Mammary epithelial cell (primary cell): ENCODE measurements at regions of chr6 and their contacts with region 1.

Region 1: DNA sequence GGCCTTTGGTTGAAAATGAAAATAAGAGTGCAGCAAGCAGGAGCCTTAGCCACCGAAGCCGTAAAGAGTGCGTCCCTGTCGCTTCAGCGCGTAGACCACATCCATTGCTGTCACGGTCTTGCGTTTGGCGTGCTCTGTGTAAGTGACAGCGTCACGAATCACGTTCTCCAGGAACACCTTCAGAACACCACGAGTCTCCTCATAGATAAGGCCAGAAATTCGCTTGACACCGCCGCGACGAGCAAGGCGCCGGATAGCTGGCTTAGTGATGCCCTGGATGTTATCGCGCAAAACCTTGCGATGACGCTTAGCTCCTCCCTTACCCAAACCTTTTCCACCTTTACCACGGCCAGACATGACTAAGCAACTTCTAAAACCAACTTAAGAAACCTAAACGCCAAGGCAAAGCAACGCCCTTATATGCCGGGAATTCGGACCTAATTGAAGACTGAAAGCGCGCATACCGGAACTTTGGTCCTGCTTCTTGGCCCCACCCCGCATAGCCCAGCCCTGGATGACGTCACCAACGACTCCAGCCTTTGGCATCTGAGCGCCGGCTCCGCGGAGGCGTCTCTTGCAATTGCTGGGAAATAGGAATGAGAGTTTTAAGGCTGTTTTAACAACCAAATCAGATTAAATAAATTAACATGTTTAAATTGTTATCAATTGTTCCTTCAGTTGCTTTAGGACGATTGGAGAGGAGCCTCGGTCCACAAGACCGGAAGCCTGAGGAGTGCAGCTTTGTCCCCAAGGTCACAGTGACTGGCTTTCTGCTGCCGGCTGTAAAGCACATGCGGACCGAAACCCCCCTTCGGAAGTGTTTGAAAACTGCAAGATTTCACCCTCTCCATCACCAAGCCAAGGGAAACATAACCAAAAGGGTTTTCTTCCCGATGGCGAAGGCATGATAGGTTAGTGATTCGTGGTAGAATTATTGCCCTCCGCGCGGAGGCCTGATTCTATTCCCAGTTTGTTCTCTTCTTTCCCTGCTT is 79.6 kb upstream of the BTN3A2 start:
- DNase-seq: peak; percentile 100
- H3K4me3 ChIP-seq: peak overlapping the region; percentile 54 to 89 (median 63)
- H3K27ac ChIP-seq: peak overlapping the region; percentile 100
- H3K4me1 ChIP-seq: no peaks in the 10 kb centered on the region
- H3K27me3 ChIP-seq: no peaks in the 10 kb centered on the region
- CTCF ChIP-seq: no peak

Region 2: DNA sequence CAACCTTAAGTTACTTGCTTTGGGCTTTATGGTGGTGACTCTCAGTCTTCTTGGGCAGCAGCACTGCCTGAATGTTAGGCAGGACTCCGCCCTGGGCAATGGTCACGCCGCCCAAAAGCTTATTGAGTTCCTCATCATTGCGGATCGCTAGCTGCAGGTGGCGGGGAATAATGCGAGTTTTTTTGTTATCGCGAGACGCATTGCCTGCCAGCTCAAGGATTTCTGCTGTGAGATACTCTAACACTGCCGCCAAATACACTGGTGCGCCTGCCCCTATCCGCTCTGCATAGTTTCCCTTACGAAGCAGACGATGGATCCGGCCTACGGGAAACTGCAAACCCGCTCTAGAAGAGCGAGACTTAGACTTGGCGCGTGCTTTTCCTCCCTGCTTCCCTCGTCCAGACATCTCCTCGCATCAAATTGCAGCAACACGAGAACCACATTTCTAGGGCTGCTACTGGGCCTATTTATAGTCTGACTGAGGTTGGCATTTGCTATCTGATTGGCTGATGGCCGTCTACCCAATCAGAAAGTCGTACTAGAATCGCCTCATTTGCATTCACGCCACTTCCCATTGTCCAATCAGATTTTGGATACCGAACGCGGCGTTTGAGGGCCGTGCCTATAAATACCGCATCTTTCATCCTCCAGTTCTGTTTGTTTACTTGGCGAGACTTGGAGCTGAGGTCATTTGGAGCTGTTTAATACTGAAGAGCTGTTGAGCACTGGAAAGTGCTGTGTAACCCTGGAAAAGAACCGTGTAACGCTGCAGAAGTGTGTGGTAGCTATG is 559.1 kb before region 1 on chr6:
- CTCF ChIA-PET with region 1: no interaction called
- dilution Hi-C with region 1: no loop called
- in situ Hi-C with region 1: no loop called
- intact Hi-C with region 1: no loop called
- DNase-seq: no peak
- H3K4me3 ChIP-seq: no peak overlapping the region
- H3K27ac ChIP-seq: no peak overlapping the region
- H3K4me1 ChIP-seq: no peaks in the 10 kb centered on the region
- H3K27me3 ChIP-seq: peaks cover 9% of the 10 kb centered on the region
- CTCF ChIP-seq: no peak

Region 3: DNA sequence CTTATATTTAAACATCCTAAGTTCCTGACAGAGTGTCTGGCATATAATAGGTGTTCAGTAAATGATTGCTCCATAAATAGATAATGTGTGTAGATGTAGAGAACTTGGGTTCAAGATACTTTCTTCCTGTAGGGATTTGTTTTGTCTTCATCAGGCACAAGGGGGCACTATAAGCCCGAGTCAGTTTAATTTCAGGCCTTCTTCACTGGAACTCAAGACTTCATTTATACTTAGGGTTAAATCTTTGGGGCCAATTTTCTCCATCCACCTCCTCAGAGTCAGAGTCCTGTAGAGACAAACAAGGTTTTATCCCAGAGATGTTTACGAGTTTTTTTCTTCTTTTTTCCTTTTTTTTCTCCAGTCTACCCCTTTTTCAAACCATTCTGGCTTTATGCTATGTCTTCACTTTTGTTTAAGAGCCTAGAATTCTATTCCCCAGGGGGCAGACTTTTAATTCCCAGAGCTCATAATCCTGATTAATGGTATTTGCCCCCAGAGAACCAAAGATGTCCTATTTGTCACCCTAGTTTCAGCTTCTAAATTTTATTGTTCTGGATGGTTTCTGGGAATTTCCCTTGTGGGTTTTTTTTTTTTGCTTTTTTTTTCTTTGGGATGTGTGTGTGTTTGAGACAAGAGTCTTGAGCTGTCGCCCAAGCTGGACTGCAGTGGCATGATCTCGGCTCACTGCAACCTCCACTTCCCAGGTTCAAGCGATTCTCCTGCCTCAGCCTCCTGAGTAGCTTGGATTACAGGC is 109.8 kb before region 1 on chr6:
- CTCF ChIA-PET with region 1: no interaction called
- dilution Hi-C with region 1: no loop called
- in situ Hi-C with region 1: no loop called
- intact Hi-C with region 1: loop called (anchors 1 kb)
- DNase-seq: peak; percentile 60
- H3K4me3 ChIP-seq: no peak overlapping the region
- H3K27ac ChIP-seq: no peak overlapping the region
- H3K4me1 ChIP-seq: peaks cover 3% of the 10 kb centered on the region
- H3K27me3 ChIP-seq: no peaks in the 10 kb centered on the region
- CTCF ChIP-seq: peak; percentile 52 to 64

Region 4: DNA sequence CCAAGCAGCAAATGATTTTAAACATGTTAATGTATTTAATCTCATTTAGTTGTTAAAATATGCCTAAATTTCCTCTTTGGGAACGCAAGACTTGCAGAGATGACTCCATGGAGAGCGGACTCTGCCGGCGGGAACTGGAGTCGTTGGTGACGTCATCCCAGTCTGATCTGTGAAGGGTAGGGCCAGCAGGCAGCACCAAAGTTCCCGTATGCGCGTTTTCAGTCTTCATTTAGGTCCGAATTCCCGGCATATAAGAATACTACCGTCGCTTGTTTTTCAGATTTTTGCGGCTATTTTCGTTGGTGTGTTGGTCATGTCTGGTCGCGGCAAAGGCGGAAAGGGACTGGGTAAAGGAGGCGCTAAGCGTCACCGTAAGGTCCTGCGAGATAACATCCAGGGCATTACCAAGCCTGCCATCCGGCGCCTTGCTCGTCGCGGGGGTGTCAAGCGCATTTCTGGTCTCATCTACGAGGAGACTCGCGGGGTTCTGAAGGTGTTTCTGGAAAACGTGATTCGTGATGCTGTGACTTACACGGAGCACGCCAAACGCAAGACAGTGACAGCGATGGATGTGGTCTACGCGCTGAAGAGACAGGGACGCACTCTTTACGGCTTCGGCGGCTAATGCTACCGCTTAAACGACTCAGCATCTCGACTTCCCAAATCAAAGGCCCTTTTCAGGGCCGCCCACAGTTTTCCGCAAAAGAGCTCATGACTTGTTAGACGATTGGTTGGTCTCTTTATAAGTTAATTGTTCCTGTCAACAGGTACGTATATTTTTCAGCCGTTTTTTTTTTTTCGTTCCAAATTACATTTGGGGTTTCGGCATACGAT is 80.9 kb before region 1 on chr6:
- CTCF ChIA-PET with region 1: no interaction called
- dilution Hi-C with region 1: loop called (anchors 5 kb)
- in situ Hi-C with region 1: no loop called
- intact Hi-C with region 1: loop called (anchors 1 kb)
- DNase-seq: peak; percentile 95
- H3K4me3 ChIP-seq: peak overlapping the region; percentile 67 to 73 (median 71)
- H3K27ac ChIP-seq: peak overlapping the region; percentile 97
- H3K4me1 ChIP-seq: peaks cover 19% of the 10 kb centered on the region
- H3K27me3 ChIP-seq: no peaks in the 10 kb centered on the region
- CTCF ChIP-seq: peak; percentile 11 to 36

Region 5: GRCh38 chr6:26223650-26224546 is 61.5 kb before region 1 on chr6:
- CTCF ChIA-PET with region 1: interaction called, 3 read pairs
- dilution Hi-C with region 1: no loop called
- in situ Hi-C with region 1: no loop called
- intact Hi-C with region 1: loop called (anchors 2 kb)
- DNase-seq: peak; percentile 91
- H3K4me3 ChIP-seq: peak overlapping the region; percentile 57 to 76 (median 68)
- H3K27ac ChIP-seq: peak overlapping the region; percentile 98
- H3K4me1 ChIP-seq: peaks cover 8% of the 10 kb centered on the region
- H3K27me3 ChIP-seq: no peaks in the 10 kb centered on the region
- CTCF ChIP-seq: no peak

Region 6: DNA sequence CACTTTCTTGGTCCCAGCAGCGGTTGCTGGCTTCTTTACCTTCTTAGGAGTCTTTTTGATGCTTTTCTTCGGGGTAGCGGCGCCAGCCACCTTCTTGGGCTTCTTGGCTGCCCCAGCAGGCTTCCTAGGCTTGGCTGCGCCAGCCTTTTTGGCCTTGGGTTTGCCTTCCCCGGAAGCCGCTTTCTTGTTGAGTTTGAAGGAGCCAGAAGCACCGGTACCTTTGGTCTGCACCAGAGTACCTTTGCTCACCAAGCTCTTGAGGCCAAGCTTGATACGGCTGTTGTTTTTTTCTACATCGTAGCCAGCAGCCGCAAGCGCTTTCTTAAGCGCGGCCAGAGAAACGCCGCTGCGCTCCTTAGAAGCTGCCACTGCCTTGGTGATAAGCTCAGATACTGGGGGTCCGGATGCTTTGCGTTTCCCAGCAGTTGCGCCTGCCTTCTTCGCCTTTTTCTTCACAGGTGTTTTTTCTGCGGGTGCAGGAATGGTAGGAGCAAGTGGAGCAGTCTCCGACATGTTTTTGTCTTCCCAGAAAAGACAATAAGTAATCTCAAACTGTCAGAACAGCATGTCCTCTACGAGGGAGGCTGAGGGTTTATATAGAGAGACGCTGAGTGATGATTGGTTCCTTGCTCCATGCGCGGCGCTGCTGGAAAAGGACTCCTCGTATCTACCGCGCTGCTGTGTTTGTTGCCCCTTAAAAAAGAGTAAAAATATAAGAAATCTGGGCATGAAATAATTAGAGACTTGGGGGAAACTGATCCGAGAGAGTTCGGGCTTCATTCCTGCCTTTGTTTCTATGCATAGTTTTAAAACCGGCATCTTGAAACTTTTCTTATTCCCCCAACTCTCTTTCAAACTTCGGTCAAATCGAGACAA is 50.8 kb before region 1 on chr6:
- CTCF ChIA-PET with region 1: no interaction called
- dilution Hi-C with region 1: no loop called
- in situ Hi-C with region 1: no loop called
- intact Hi-C with region 1: no loop called
- DNase-seq: peak; percentile 85
- H3K4me3 ChIP-seq: peak overlapping the region; percentile 45 to 51 (median 47)
- H3K27ac ChIP-seq: peak overlapping the region; percentile 69
- H3K4me1 ChIP-seq: peaks cover 3% of the 10 kb centered on the region
- H3K27me3 ChIP-seq: no peaks in the 10 kb centered on the region
- CTCF ChIP-seq: no peak

Region 7: GRCh38 chr6:26270903-26271667 is 14.4 kb before region 1 on chr6:
- CTCF ChIA-PET with region 1: no interaction called
- dilution Hi-C with region 1: no loop called
- in situ Hi-C with region 1: no loop called
- intact Hi-C with region 1: loop called (anchors 1 kb)
- DNase-seq: peak; percentile 92
- H3K4me3 ChIP-seq: peak overlapping the region; percentile 43 to 45 (median 44)
- H3K27ac ChIP-seq: peak overlapping the region; percentile 75
- H3K4me1 ChIP-seq: peaks cover 11% of the 10 kb centered on the region
- H3K27me3 ChIP-seq: no peaks in the 10 kb centered on the region
- CTCF ChIP-seq: no peak

Region 8: DNA sequence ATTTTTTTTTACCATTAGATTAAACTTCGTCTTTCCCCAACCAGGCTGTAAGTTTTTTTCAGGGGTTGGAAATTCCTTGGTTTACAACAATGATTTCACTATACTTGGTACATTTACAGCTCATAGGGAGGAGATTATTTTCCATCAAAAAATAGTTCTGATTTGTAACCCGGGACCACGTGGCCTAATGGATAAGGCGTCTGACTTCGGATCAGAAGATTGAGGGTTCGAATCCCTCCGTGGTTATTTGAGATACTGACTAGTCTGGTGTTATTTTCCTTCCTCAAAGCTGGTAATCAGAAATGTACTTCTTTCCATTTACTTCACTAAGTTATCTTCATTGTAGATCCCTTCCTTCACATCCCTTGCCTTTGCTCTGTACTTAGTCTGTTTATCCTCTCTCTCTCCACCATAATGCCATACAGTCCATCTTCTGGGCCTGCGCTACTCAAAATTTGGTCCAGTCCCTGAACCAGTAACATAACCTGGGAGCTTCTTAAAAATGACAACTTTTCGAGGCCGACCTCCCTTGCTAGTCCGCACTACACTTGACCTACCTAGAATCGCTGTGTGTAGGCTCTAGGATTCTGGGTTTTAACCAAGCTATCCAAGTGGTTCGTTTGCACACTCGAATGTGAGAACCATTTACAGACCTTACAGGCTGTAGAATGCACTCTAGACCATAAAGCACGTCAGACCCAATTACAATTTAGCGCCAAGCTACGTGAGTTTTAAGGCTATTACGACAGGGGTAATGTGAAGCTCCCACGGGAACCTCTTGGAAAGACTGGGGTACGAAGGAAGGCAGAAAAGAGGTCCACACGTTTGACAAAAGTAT is 37.4 kb after region 1 on chr6:
- CTCF ChIA-PET with region 1: no interaction called
- dilution Hi-C with region 1: no loop called
- in situ Hi-C with region 1: no loop called
- intact Hi-C with region 1: loop called (anchors 2 kb)
- DNase-seq: peak; percentile 90
- H3K4me3 ChIP-seq: peak overlapping the region; percentile 54 to 87 (median 60)
- H3K27ac ChIP-seq: peak overlapping the region; percentile 34
- H3K4me1 ChIP-seq: no peaks in the 10 kb centered on the region
- H3K27me3 ChIP-seq: no peaks in the 10 kb centered on the region
- CTCF ChIP-seq: no peak

Region 9: GRCh38 chr6:26613689-26614683 is 328.5 kb after region 1 on chr6:
- CTCF ChIA-PET with region 1: no interaction called
- dilution Hi-C with region 1: no loop called
- in situ Hi-C with region 1: no loop called
- intact Hi-C with region 1: no loop called
- DNase-seq: no peak
- H3K4me3 ChIP-seq: no peak overlapping the region
- H3K27ac ChIP-seq: no peak overlapping the region
- H3K4me1 ChIP-seq: no peaks in the 10 kb centered on the region
- H3K27me3 ChIP-seq: peaks cover 18% of the 10 kb centered on the region
- CTCF ChIP-seq: no peak